ENCODE measurements at regions of chrX and their contacts with region 1.

Region 1: GRCh38 chrX:2627272-2627867 is 63.7 kb upstream of the CD99 start:
- DNase-seq: no peak
- H3K4me3 Mint-ChIP-seq: no peak overlapping the region
- H3K27ac Mint-ChIP-seq: no peak overlapping the region
- H3K4me1 Mint-ChIP-seq: peaks cover 41% of the 10 kb centered on the region
- H3K27me3 Mint-ChIP-seq: no peaks in the 10 kb centered on the region

Region 2: DNA sequence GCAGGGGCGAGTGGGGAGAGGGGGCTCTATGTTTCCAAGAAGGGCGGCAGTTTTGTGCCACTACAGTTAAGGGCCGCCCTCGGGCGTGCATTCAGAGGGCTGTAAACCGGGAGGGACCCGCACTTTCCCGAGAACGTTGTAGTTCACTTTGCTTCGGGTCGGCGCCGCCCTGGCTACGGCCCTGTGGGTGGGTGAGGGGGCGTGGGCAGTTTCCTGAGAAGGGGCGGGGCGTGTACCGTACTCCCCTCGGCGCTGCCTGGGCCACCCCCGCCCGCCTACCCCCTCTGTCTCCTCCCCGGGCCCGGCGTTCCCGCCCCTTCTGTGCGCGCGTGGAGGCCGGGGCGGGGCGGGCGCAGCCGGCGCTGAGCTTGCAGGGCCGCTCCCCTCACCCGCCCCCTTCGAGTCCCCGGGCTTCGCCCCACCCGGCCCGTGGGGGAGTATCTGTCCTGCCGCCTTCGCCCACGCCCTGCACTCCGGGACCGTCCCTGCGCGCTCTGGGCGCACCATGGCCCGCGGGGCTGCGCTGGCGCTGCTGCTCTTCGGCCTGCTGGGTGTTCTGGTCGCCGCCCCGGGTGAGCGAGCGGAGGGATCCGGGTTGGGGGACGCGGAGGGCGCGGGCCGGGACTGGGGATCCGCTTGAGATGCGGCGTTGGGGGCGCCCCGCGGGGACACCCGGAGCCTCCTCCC is 63.6 kb after region 1 on chrX and contains the start of gene CD99:
- intact Hi-C with region 1: loop called (anchors 5 kb)
- DNase-seq: peak; percentile 89
- H3K4me3 Mint-ChIP-seq: peak within 1 kb of the TSS; percentile 95
- H3K27ac Mint-ChIP-seq: peak within 1 kb of the TSS; percentile 95
- H3K4me1 Mint-ChIP-seq: peaks cover 25% of the 10 kb centered on the region
- H3K27me3 Mint-ChIP-seq: peaks cover 1% of the 10 kb centered on the region
- total RNA-seq, gene CD99: 280 and 290 TPM in 2 replicates

Measured in activated T-helper 2 cell treated with anti-CD3 and anti-CD28 coated beads, Interferon-gamma antibody, Interleukin-2, Interleukin-4, amounts not matched to agents 10 μg/mL and 5 μg/mL and 100 μg/mL, durations not matched to agents 14 hours and 24 hours and 36 hours (primary cell).